PC-3 (cell line): ENCODE measurements at regions of chr3 and their contacts with region 1.

Region 1: DNA sequence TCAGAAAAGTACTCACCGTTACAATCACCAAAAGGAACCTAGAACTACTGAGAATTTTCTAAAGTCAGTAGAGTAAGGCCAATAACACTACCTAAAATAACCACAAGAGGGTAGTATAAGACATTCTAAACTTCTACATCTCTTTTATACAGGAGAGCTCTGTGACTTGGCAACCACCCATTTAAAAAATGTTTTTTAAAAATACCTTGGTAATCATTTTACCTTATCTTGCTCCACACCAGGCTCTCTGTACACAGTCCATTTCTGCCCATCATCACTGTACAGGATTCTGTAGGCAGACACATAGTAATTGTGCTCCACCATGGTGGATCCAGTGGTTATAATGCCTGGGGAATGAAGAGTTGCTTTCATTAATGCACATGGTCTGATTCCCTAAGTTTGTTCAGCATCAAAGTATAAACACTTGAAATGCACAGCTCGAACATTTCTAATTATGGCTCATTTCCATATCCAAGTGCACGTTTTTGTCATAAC is 54.5 kb downstream of the ST3GAL6 start:
- DNase-seq: peak; percentile 89
- ATAC-seq: peak; percentile 42
- H3K4me3 ChIP-seq: no peak overlapping the region
- H3K27ac ChIP-seq: peak overlapping the region; percentile 21
- H3K4me1 ChIP-seq: peaks cover 31% of the 10 kb centered on the region
- H3K27me3 ChIP-seq: no peaks in the 10 kb centered on the region
- CTCF ChIP-seq: peak; percentile 84

Region 2: GRCh38 chr3:98778852-98779413 is 38.7 kb before region 1 on chr3:
- CTCF ChIA-PET with region 1: no interaction called
- POLR2A ChIA-PET with region 1: no interaction called
- intact Hi-C with region 1: no loop called
- DNase-seq: no peak
- ATAC-seq: no peak
- H3K4me3 ChIP-seq: no peak overlapping the region
- H3K27ac ChIP-seq: no peak overlapping the region
- H3K4me1 ChIP-seq: peaks cover 4% of the 10 kb centered on the region; the same call in 1 of the 2 replicates
- H3K27me3 ChIP-seq: no peaks in the 10 kb centered on the region
- CTCF ChIP-seq: no peak

Region 3: GRCh38 chr3:98885851-98886250 is 68.3 kb after region 1 on chr3:
- CTCF ChIA-PET with region 1: no interaction called
- POLR2A ChIA-PET with region 1: no interaction called
- intact Hi-C with region 1: loop called (anchors 2 kb)
- DNase-seq: no peak
- ATAC-seq: no peak
- H3K4me3 ChIP-seq: peak overlapping the region; percentile 7; the same call in 1 of the 2 replicates
- H3K27ac ChIP-seq: peak overlapping the region; percentile 41
- H3K4me1 ChIP-seq: peaks cover 69% of the 10 kb centered on the region
- H3K27me3 ChIP-seq: no peaks in the 10 kb centered on the region
- CTCF ChIP-seq: no peak

Region 4: GRCh38 chr3:98994128-98994762 is 176.7 kb after region 1 on chr3:
- CTCF ChIA-PET with region 1: interaction called, 14 read pairs
- POLR2A ChIA-PET with region 1: interaction called, 3 read pairs
- intact Hi-C with region 1: loop called (anchors 1 kb)
- DNase-seq: peak; percentile 84
- ATAC-seq: peak; percentile 70
- H3K4me3 ChIP-seq: no peak overlapping the region
- H3K27ac ChIP-seq: peak overlapping the region; percentile 7; the same call in 1 of the 2 replicates
- H3K4me1 ChIP-seq: peaks cover 7% of the 10 kb centered on the region; the same call in 1 of the 2 replicates
- H3K27me3 ChIP-seq: no peaks in the 10 kb centered on the region
- CTCF ChIP-seq: peak; percentile 93